OCI-LY7 (cell line): ENCODE measurements at regions of chr1 and their contacts with region 1.

Region 1: GRCh38 chr1:157806431-157807149 is 13.3 kb downstream of the FCRL1 start:
- DNase-seq: peak; percentile 100
- H3K4me3 ChIP-seq: peak overlapping the region; percentile 58
- H3K27ac ChIP-seq: peak overlapping the region; percentile 97
- H3K4me1 ChIP-seq: peaks cover 79% of the 10 kb centered on the region
- CTCF ChIP-seq: no peak

Region 2: DNA sequence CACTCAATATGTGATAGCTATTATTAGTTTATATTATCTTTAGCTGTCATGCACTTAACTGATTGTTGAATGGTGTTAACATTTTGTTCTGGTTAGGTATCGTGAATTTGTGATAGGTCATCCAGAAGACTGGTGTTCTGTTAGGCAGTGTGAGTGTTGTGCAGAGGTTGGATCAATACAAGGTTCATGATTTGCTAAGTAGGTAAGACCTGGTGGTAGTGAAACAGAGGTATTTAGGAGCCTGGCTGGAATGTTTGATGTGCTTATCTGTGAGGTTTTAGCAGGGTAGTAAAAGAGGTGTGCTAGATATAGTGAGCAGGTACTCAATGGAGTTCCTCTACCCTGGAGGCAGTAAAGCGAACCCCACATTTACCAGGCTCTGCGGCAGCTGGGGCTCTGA is 188.4 kb before region 1 on chr1:
- CTCF ChIA-PET with region 1: no interaction called
- POLR2A ChIA-PET with region 1: no interaction called
- intact Hi-C with region 1: no loop called
- DNase-seq: no peak
- H3K4me3 ChIP-seq: no peak overlapping the region
- H3K27ac ChIP-seq: no peak overlapping the region
- H3K4me1 ChIP-seq: peaks cover 17% of the 10 kb centered on the region
- CTCF ChIP-seq: no peak

Region 3: GRCh38 chr1:157725221-157725577 is 81.4 kb before region 1 on chr1:
- CTCF ChIA-PET with region 1: no interaction called
- POLR2A ChIA-PET with region 1: no interaction called
- intact Hi-C with region 1: loop called (anchors 2 kb)
- DNase-seq: peak; percentile 71
- H3K4me3 ChIP-seq: peak overlapping the region; percentile 61
- H3K27ac ChIP-seq: peak overlapping the region; percentile 93
- H3K4me1 ChIP-seq: peaks cover 45% of the 10 kb centered on the region
- CTCF ChIP-seq: no peak

Region 4: DNA sequence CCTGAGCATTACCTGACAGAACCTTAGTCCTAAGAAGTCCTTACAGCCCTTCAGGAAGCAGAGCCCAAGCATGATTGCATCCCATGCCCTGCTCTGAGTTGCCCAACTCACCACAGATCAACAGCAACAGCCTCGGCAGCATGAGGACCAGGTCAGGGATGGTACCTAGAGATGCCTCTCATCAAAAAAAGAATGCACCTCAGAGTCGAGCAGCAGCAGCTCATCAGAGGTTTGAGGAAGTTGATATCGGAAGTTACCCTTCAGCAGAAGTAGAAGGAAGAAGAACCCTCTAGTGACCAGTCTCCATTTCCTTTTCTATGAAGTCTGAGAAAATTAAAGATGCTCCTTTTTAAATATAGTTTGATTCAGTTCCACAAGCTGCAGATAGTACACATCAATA is 13.3 kb after region 1 on chr1 and contains the start of gene FCRL1:
- CTCF ChIA-PET with region 1: interaction called, 3 read pairs
- POLR2A ChIA-PET with region 1: interaction called, 71 read pairs
- intact Hi-C with region 1: loop called (anchors 1 kb)
- DNase-seq: peak; percentile 82
- H3K4me3 ChIP-seq: peak within 1 kb of the TSS; percentile 69
- H3K27ac ChIP-seq: peak within 1 kb of the TSS; percentile 85
- H3K4me1 ChIP-seq: peaks cover 72% of the 10 kb centered on the region
- CTCF ChIP-seq: peak; percentile 36; the same call in 1 of the 2 replicates
- total RNA-seq, gene FCRL1: 42.5 and 62.8 TPM in 2 replicates

Region 5: DNA sequence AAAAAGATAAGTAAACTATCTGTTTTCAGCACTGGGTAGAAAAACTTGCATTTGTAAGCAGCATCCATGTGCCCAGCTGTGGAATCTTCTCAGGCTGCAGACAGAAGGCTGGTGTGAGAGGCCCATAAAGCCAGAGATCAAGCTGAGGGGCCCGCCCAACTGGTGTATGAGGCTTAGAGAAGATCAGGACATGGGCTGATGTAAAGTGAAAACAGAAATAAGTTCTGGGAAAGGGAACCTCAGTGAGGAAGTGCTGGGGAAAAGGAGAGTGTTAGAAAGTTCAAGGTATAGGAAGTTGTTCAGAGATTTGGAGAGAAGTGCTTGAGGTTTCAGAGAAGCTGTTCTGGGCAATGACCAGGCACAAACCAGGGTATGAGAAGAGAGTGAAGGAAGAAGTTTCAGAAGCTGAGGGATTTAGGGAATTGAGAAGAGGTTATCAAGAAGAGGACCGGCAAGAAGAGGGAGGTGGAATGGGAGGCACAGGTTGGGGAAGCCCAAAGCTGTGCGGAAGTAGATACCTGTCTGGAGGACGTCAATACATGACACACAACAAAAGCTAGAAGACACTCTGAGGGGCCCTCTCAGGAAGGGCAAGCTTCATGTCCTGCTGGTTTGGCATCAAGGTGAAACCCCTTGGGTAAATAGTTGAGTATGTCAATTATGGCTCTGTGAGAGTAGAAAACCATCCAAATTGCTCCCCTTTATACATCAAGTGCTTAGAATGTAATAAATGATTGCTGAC is 37.7 kb after region 1 on chr1:
- CTCF ChIA-PET with region 1: no interaction called
- POLR2A ChIA-PET with region 1: interaction called, 14 read pairs
- intact Hi-C with region 1: loop called (anchors 1 kb)
- DNase-seq: no peak
- H3K4me3 ChIP-seq: no peak overlapping the region
- H3K27ac ChIP-seq: no peak overlapping the region
- H3K4me1 ChIP-seq: peaks cover 75% of the 10 kb centered on the region
- CTCF ChIP-seq: no peak